ENCODE measurements at regions of chr12 and their contacts with region 1.

Region 1: GRCh38 chr12:96399919-96400797 is at the start of gene CDK17:
- DNase-seq: peak; percentile 90
- H3K4me3 Mint-ChIP-seq: peak within 1 kb of the TSS; percentile 88
- H3K27ac Mint-ChIP-seq: peak within 1 kb of the TSS; percentile 96
- H3K4me1 Mint-ChIP-seq: peaks cover 50% of the 10 kb centered on the region
- H3K27me3 Mint-ChIP-seq: no peaks in the 10 kb centered on the region
- total RNA-seq, gene CDK17: 38.7 to 43.5 TPM

Region 2: DNA sequence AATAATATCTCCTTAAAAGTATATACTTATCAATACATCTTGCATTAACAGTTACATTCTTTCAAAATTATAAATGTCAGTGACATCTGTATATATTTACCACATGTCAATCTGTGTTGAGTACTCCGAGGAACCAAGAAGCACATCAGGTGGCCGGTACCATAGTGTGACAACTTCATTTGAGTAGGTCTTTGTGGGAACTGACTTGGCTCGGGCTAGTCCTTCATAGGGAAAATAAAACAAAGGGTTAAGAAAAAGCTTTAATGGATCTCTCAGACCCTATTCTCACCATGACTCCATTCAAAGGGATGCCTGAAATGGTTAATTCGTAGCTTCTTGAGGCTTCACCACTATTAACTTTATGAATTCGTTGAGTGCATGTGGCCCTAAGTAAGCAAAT is 111.1 kb before region 1 on chr12:
- CTCF ChIA-PET with region 1: no interaction called
- POLR2A ChIA-PET with region 1: no interaction called
- DNase-seq: no peak
- H3K4me3 Mint-ChIP-seq: no peak overlapping the region
- H3K27ac Mint-ChIP-seq: no peak overlapping the region
- H3K4me1 Mint-ChIP-seq: peaks cover 21% of the 10 kb centered on the region
- H3K27me3 Mint-ChIP-seq: no peaks in the 10 kb centered on the region

Region 3: GRCh38 chr12:96386794-96387193 is 13.4 kb before region 1 on chr12:
- CTCF ChIA-PET with region 1: interaction called, 25 read pairs
- POLR2A ChIA-PET with region 1: interaction called, 3 read pairs
- DNase-seq: no peak
- H3K4me3 Mint-ChIP-seq: no peak overlapping the region
- H3K27ac Mint-ChIP-seq: no peak overlapping the region
- H3K4me1 Mint-ChIP-seq: peaks cover 55% of the 10 kb centered on the region
- H3K27me3 Mint-ChIP-seq: no peaks in the 10 kb centered on the region

Region 4: GRCh38 chr12:96416033-96416801 is 16.1 kb after region 1 on chr12:
- CTCF ChIA-PET with region 1: interaction called, 68 read pairs
- POLR2A ChIA-PET with region 1: no interaction called
- DNase-seq: no peak
- H3K4me3 Mint-ChIP-seq: no peak overlapping the region
- H3K27ac Mint-ChIP-seq: no peak overlapping the region
- H3K4me1 Mint-ChIP-seq: peaks cover 49% of the 10 kb centered on the region
- H3K27me3 Mint-ChIP-seq: no peaks in the 10 kb centered on the region

Region 5: GRCh38 chr12:96434107-96434506 is 33.9 kb after region 1 on chr12:
- CTCF ChIA-PET with region 1: interaction called, 10 read pairs
- POLR2A ChIA-PET with region 1: no interaction called
- DNase-seq: peak; percentile 87
- H3K4me3 Mint-ChIP-seq: peak overlapping the region; percentile 3
- H3K27ac Mint-ChIP-seq: peak overlapping the region; percentile 83
- H3K4me1 Mint-ChIP-seq: peaks cover 44% of the 10 kb centered on the region
- H3K27me3 Mint-ChIP-seq: no peaks in the 10 kb centered on the region

Region 6: DNA sequence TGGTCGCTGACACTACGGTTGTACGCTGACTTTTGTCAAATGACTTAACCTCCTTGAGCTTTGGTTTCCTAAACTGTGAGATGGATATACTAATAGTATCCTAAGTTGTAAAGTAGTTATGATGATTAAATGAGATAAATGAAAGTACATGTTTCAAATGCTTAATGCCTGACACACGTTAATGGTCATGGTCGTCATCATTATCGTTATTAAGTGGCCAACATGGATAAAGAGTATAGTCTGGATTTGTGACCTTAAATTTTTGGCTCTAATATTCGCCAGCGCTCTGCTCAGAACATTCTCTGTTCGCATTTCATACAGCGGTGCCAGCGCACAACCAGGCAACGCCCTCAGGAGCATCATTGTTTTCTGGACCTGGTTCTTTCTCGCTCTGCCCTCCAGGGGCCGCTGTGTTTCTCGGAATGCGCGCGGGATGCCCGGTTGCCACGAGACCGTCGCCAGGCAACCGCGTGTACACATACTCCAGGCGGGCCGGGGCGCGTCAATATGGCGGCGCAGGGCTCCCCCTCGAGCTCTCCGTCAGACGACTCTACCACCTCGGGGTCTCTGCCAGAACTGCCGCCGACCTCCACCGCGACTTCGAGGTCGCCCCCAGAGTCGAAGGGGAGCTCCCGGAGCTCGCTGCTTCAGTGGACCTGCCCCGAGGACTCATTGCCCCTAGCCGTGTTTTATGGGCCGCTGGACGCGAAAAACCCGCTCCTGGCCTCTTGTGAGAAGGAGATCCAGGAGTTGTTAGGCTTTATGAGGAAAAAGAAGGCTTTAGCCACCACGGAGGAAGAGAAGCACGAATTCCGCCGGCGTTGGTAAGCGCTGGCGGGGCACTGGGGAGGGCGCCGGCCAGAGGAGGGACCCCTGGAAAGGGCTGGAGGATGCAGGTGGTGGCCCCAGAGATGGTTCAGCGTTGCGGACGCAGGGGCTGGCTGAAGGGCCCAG is 89.2 kb after region 1 on chr12 and contains the start of gene CFAP54:
- CTCF ChIA-PET with region 1: interaction called, 12 read pairs
- POLR2A ChIA-PET with region 1: interaction called, 3 read pairs
- DNase-seq: peak; percentile 96
- H3K4me3 Mint-ChIP-seq: peak within 1 kb of the TSS; percentile 80
- H3K27ac Mint-ChIP-seq: peak within 1 kb of the TSS; percentile 66
- H3K4me1 Mint-ChIP-seq: peaks cover 43% of the 10 kb centered on the region
- H3K27me3 Mint-ChIP-seq: peaks cover 11% of the 10 kb centered on the region
- total RNA-seq, gene CFAP54: 0.23 to 0.40 TPM

Region 7: GRCh38 chr12:96516472-96517430 is 116.6 kb after region 1 on chr12:
- CTCF ChIA-PET with region 1: interaction called, 14 read pairs
- POLR2A ChIA-PET with region 1: interaction called, 5 read pairs
- DNase-seq: peak; percentile 92
- H3K4me3 Mint-ChIP-seq: peak overlapping the region; percentile 38
- H3K27ac Mint-ChIP-seq: peak overlapping the region; percentile 82
- H3K4me1 Mint-ChIP-seq: peaks cover 20% of the 10 kb centered on the region
- H3K27me3 Mint-ChIP-seq: peaks cover 2% of the 10 kb centered on the region